ENCODE measurements at regions of chr11 and their contacts with region 1.

Region 1: GRCh38 chr11:69642913-69643632 is 2.1 kb downstream of the CCND1 start:
- DNase-seq: no peak
- ATAC-seq: peak; percentile 31
- H3K4me3 ChIP-seq: peak overlapping the region; percentile 80 to 93
- H3K27ac ChIP-seq: peak overlapping the region; percentile 73
- H3K4me1 ChIP-seq: peaks cover 37% of the 10 kb centered on the region
- H3K27me3 ChIP-seq: no peaks in the 10 kb centered on the region
- CTCF ChIP-seq: peak; percentile 98

Region 2: GRCh38 chr11:69101115-69101791 is 541.8 kb before region 1 on chr11:
- CTCF ChIA-PET with region 1: interaction called, 9 read pairs
- POLR2A ChIA-PET with region 1: no interaction called
- in situ Hi-C with region 1: no loop called
- intact Hi-C with region 1: loop called (anchors 2 kb)
- DNase-seq: peak; percentile 67
- ATAC-seq: peak; percentile 85
- H3K4me3 ChIP-seq: no peak overlapping the region
- H3K27ac ChIP-seq: no peak overlapping the region
- H3K4me1 ChIP-seq: peaks cover 35% of the 10 kb centered on the region
- H3K27me3 ChIP-seq: no peaks in the 10 kb centered on the region
- CTCF ChIP-seq: peak; percentile 100

Region 3: DNA sequence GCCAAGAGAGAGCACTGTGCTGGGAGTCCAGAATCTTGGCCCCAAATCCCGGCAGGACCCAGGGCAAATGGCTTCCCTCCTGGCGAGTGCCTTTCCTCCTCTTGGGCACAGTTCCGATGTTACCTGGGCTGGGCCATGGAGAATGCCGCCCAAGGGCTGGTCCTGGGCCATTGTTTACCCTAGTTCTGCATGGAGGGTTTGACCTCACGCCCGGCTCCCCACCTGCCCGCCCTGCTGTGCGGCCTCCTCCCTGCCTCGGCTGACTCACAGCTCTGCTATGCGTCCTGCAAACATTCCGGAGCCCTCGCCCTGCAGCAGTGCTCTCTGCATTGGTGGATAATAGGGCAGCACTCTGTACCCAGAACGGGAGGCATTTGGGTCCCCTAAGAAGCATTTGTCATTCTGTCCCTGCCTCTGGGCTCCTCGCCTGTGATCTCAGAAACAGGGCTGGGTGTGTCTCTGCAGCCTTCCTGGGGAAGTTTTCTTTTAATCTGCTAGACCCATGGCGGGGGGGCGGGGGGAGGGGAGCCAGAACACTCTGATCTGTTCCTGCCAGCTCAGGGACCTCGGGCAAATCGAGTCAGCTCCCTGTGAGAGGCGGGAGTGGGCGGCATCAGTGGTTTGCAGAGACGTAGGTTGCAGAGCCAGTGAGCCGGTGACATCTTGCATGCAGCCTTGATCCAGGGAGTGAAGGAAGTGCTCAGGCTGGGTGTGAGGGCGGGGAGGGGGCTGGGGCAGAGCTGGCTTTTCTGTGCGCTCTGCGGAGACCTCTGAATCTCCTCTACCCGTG is 520.2 kb before region 1 on chr11:
- CTCF ChIA-PET with region 1: no interaction called
- POLR2A ChIA-PET with region 1: no interaction called
- in situ Hi-C with region 1: no loop called
- intact Hi-C with region 1: loop called (anchors 5 kb)
- DNase-seq: peak; percentile 64
- ATAC-seq: peak; percentile 95
- H3K4me3 ChIP-seq: peak overlapping the region; percentile 9 to 44; a peak in 3 of 4 replicates
- H3K27ac ChIP-seq: peak overlapping the region; percentile 94
- H3K4me1 ChIP-seq: peaks cover 61% of the 10 kb centered on the region
- H3K27me3 ChIP-seq: no peaks in the 10 kb centered on the region
- CTCF ChIP-seq: no peak

Region 4: DNA sequence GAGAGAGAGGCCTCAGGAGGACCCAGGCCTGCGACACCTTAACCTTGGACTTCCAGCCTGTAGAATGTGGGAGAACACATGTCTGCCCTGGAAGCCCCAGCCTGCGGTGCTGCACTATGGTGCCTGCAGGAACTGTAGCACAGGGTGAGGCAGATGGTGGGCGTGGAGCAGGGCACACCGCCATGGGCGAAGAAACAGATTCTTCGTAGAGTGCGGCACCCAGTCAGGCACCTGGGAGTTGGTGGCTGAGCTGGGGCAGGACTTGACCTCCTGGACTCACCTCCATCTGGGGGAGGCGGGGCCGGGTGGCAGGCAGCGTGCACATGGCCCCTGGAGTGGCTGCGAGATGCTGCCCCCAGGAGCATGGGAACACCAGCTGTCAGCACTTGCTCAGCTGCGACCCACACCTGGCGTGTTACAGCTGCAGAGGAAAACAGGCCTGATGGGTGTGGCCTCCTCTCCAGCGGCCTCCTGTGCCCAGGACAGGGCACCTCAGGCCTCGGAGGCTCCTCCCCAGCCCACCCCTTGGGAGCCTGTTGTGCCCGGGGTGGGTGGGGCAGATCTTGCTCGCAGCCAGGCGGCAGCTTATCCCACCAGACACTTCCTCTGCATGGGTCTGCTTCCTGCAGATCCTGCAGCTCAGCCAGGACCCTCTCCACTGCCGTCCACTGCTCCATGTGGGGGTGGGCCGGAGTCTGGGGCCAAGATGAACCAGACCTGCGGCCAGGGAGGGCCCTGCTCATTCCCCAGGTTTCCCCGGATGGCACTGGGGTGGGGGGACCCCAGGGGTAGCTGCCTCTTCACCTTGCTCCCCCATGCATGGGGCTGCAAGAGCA is 268.7 kb before region 1 on chr11:
- CTCF ChIA-PET with region 1: no interaction called
- POLR2A ChIA-PET with region 1: no interaction called
- in situ Hi-C with region 1: no loop called
- intact Hi-C with region 1: loop called (anchors 5 kb)
- DNase-seq: no peak
- ATAC-seq: no peak
- H3K4me3 ChIP-seq: no peak overlapping the region
- H3K27ac ChIP-seq: peak overlapping the region; percentile 65; the same call in 1 of the 2 replicates
- H3K4me1 ChIP-seq: peaks cover 40% of the 10 kb centered on the region
- H3K27me3 ChIP-seq: no peaks in the 10 kb centered on the region
- CTCF ChIP-seq: no peak

Region 5: DNA sequence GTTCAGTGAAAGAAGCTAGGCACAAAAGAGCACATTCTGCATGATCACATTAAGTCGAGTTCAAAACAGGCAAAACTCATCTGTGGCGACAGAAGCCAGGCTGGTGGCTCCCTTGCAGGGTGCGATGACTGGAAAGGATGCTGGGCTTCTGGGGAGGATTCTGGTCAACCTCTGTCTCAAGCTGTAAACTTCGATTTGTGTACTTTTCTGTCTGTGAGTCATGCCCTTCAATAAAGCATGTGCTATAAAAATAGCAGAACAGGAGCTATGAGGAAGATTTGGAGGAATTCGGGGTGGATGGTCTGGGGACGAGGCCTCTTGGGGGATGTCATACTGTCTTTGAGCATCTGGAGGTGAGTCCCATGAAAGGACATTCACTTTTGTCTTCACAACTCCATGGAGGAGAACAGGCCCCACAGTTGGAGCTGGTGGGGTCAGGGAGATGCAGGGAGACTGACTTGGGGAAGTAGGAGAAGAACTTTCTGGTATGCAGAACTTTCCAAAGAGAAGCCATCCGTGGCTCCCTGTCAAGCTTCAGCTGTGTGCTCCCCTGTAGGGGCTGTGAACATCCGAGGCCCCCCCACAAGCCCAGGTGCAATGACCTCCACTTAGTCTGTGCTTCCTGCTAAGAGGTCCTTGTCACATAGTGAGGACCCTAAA is 239.4 kb before region 1 on chr11:
- CTCF ChIA-PET with region 1: no interaction called
- POLR2A ChIA-PET with region 1: no interaction called
- in situ Hi-C with region 1: no loop called
- intact Hi-C with region 1: no loop called
- DNase-seq: no peak
- ATAC-seq: peak; percentile 60
- H3K4me3 ChIP-seq: no peak overlapping the region
- H3K27ac ChIP-seq: no peak overlapping the region; the same call in 1 of the 2 replicates
- H3K4me1 ChIP-seq: peaks cover 10% of the 10 kb centered on the region
- H3K27me3 ChIP-seq: no peaks in the 10 kb centered on the region
- CTCF ChIP-seq: no peak

Region 6: DNA sequence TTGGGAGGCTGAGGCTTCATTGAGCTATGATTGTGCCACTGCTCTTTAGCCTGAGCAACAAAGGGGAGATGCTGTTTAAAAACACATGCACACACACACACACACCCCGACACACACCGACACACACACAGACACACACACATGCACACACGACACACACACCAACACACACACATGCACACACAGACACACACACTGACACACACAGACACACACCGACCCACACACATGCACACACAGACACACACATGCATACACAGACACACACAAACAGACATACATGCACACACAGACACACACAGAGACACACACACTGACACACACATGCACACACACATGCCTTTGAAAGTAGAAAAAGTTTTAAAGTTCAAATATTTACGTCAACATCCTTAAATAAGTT is 37.6 kb after region 1 on chr11:
- CTCF ChIA-PET with region 1: no interaction called
- POLR2A ChIA-PET with region 1: no interaction called
- in situ Hi-C with region 1: no loop called
- intact Hi-C with region 1: no loop called
- DNase-seq: no peak
- ATAC-seq: no peak
- H3K4me3 ChIP-seq: no peak overlapping the region
- H3K27ac ChIP-seq: no peak overlapping the region
- H3K4me1 ChIP-seq: no peaks in the 10 kb centered on the region
- H3K27me3 ChIP-seq: no peaks in the 10 kb centered on the region
- CTCF ChIP-seq: no peak

Region 7: DNA sequence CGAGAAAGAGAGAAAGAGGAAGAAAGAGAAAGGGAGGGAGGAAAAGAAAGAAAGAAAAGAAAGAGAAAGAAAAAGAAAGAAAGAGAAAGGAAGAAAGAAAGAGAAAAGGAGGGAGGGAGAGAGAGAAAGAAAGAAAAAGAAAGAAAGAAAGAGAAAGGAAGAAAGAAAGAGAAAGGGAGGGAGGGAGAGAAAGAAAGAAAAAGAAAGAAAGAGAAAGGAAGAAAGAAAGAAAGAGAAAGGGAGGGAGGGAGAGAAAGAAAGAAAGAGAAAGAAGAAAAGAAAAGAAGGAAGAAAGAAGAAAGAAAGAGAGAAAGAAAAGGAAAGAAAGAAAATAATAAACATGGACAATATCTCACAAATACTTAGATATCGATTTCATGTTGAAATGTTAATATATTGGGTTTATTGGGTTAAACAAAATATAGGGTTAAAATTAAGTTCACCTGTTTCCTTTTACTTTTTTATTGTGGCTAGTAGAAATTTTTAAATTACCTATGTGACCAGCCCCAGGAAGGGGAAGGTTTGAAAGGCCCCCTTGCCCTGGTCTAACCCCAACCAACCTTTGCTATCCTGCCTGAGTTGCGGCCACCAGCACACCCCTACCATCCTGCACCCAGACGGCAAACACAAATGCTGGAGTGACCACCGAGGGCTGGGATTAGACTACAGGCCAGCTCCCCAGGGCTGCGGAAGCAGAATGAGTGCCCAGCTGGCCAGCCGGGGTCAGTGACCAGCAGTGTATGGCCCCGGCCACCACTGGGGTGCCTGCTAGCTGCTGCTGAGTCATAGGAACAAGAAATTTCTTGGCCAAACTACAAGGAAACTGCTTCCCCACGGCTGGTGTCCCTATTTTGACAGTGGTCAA is 257.1 kb after region 1 on chr11:
- CTCF ChIA-PET with region 1: no interaction called
- POLR2A ChIA-PET with region 1: no interaction called
- in situ Hi-C with region 1: no loop called
- intact Hi-C with region 1: no loop called
- DNase-seq: no peak
- ATAC-seq: peak; percentile 46
- H3K4me3 ChIP-seq: no peak overlapping the region
- H3K27ac ChIP-seq: no peak overlapping the region
- H3K4me1 ChIP-seq: no peaks in the 10 kb centered on the region
- H3K27me3 ChIP-seq: peaks cover 12% of the 10 kb centered on the region; the same call in 1 of the 2 replicates
- CTCF ChIP-seq: no peak